ENCODE measurements at regions of chr19 and their contacts with region 1.

Region 1: GRCh38 chr19:46271481-46272197 is 25.2 kb upstream of the HIF3A start:
- DNase-seq: peak in 1 of 2 donors; percentile 45
- H3K4me3 ChIP-seq: no peak overlapping the region
- H3K27ac ChIP-seq: peak overlapping the region; percentile 49 to 81
- H3K4me1 ChIP-seq: no peaks in the 10 kb centered on the region
- H3K27me3 ChIP-seq: no peaks in the 10 kb centered on the region
- CTCF ChIP-seq: no peak
- POLR2A ChIP-seq: no peak

Region 2: DNA sequence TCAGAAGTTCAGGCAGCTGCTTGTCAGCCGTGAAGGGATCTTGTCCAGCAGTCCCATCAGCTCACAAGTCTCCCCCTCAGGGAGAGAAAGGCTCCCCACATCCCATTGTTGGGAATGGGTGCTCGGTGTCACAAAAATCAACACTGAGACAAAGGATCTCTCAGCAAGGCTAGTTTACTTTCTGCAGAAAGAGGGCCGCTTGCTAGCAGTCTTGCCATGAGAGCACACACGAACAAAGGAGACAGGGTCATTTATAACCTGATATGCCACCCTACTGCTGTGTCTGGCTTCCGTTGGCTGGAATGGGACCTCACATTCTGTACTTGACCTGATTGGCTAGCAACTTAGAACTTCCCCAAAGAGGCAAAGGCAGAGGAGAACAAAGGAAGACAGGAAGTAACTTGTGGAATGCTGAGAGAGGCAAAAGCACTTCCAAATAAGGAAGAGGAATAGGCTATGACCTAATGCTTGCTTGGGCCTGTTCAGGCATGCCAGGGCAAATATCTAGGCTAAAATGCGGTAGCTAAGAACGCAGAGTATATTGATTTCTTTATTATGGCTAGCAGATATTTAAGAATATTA is 138.4 kb before region 1 on chr19:
- intact Hi-C with region 1: no loop called
- DNase-seq: peak; percentile 41 to 65
- H3K4me3 ChIP-seq: no peak overlapping the region
- H3K27ac ChIP-seq: peak overlapping the region; percentile 90 to 91
- H3K4me1 ChIP-seq: peaks cover 6 to 7% of the 10 kb centered on the region in 2 donors
- H3K27me3 ChIP-seq: no peaks in the 10 kb centered on the region
- CTCF ChIP-seq: no peak
- POLR2A ChIP-seq: peak; percentile 20 to 29

Region 3: DNA sequence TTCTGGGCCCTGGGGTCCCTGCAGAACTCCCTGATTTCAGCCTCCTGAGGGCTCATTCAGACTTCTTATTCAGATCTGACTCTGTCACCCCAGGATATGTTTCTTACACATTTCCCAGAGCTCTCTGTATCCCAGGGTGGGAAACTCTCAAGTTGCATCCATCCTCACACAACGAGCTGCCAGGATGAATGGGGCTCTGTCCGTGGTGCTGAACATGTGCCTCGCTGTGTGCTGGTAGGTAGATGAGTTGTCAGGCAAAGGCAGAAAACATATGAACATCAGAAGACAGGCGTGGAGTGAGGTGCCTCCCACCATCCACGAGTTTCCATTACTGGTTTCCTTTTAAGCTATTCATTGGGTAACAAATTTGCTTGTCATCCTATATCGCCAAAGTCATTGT is 53.5 kb before region 1 on chr19:
- intact Hi-C with region 1: no loop called
- DNase-seq: no peak
- H3K4me3 ChIP-seq: no peak overlapping the region
- H3K27ac ChIP-seq: no peak overlapping the region
- H3K4me1 ChIP-seq: no peaks in the 10 kb centered on the region
- H3K27me3 ChIP-seq: no peaks in the 10 kb centered on the region
- CTCF ChIP-seq: no peak
- POLR2A ChIP-seq: no peak

Region 4: GRCh38 chr19:46495787-46496101 is 224.1 kb after region 1 on chr19 and contains the start of gene PNMA8B:
- intact Hi-C with region 1: loop called (anchors 10 kb)
- DNase-seq: peak in 1 of 2 donors; percentile 67
- H3K4me3 ChIP-seq: peak within 1 kb of the TSS; percentile 17 to 30
- H3K27ac ChIP-seq: no peak within 1 kb of the TSS
- H3K4me1 ChIP-seq: peaks cover 0 to 12% of the 10 kb centered on the region in 2 donors
- H3K27me3 ChIP-seq: no peaks in the 10 kb centered on the region
- CTCF ChIP-seq: no peak
- POLR2A ChIP-seq: no peak
- total RNA-seq, gene PNMA8B: 2.2 to 7.9 (median 3.1) TPM in 3 of 4 donors, not detected in the other